Activated naive CD4-positive, alpha-beta T cell treated with anti-CD3 and anti-CD28 coated beads for 36 hours (primary cell): ENCODE measurements at regions of chr1 and their contacts with region 1.

Region 1: GRCh38 chr1:161399257-161399998 is 31.8 kb upstream of the CFAP126 start:
- DNase-seq: peak; percentile 94
- H3K4me3 Mint-ChIP-seq: peak overlapping the region; percentile 96
- H3K27ac Mint-ChIP-seq: peak overlapping the region; percentile 100
- H3K4me1 Mint-ChIP-seq: peaks cover 25% of the 10 kb centered on the region
- H3K27me3 Mint-ChIP-seq: peaks cover 6% of the 10 kb centered on the region

Region 2: DNA sequence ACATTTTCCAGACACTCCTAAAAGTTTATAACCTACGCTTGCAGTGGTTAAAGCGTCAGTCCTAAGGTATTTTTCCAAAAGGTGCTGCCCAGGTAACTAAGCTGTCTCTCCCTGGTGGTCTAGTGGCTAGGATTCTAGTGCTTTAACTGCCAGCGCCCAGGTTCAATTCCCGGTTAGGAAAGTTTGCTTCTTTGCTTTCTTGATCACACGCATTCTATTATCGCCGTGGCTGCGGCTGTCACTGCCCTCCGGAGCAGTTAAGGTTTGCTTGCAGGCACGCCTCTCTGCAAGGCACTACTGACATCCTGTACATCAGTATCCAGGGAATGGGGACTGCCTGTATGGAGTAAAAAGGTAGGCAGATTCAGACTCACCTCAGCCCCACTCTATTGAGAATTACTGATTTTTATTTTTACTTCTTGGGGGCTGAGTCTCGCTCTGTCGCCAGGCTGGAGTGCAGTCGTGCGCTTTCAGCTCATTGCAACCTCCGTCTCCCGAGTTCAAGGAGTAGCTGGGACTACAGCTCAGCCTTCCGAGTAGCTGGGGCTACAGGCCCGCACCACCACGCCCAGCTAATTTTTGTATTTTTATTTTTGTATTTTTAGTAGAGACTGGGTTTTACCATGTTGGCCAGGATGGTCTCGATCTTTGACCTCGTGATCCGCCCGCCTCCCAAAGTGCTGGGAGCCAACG is 21.5 kb after region 1 on chr1:
- CTCF ChIA-PET with region 1: interaction called, 3 read pairs
- intact Hi-C with region 1: loop called (anchors 1 kb)
- DNase-seq: no peak
- H3K4me3 Mint-ChIP-seq: peak overlapping the region; percentile 17
- H3K27ac Mint-ChIP-seq: no peak overlapping the region
- H3K4me1 Mint-ChIP-seq: peaks cover 4% of the 10 kb centered on the region
- H3K27me3 Mint-ChIP-seq: peaks cover 3% of the 10 kb centered on the region

Region 3: GRCh38 chr1:161440312-161440894 is 41.0 kb after region 1 on chr1:
- CTCF ChIA-PET with region 1: interaction called, 3 read pairs
- intact Hi-C with region 1: loop called (anchors 10 kb)
- DNase-seq: peak; percentile 73
- H3K4me3 Mint-ChIP-seq: peak overlapping the region; percentile 85
- H3K27ac Mint-ChIP-seq: peak overlapping the region; percentile 83
- H3K4me1 Mint-ChIP-seq: peaks cover 5% of the 10 kb centered on the region
- H3K27me3 Mint-ChIP-seq: peaks cover 27% of the 10 kb centered on the region

Region 4: GRCh38 chr1:161473363-161473762 is 73.9 kb after region 1 on chr1:
- CTCF ChIA-PET with region 1: no interaction called
- intact Hi-C with region 1: no loop called
- DNase-seq: peak; percentile 28
- H3K4me3 Mint-ChIP-seq: peak overlapping the region; percentile 29
- H3K27ac Mint-ChIP-seq: no peak overlapping the region
- H3K4me1 Mint-ChIP-seq: peaks cover 5% of the 10 kb centered on the region
- H3K27me3 Mint-ChIP-seq: peaks cover 28% of the 10 kb centered on the region

Region 5: GRCh38 chr1:161531986-161532643 is 132.7 kb after region 1 on chr1:
- CTCF ChIA-PET with region 1: no interaction called
- intact Hi-C with region 1: loop called (anchors 2 kb)
- DNase-seq: no peak
- H3K4me3 Mint-ChIP-seq: no peak overlapping the region
- H3K27ac Mint-ChIP-seq: no peak overlapping the region
- H3K4me1 Mint-ChIP-seq: peaks cover 14% of the 10 kb centered on the region
- H3K27me3 Mint-ChIP-seq: peaks cover 3% of the 10 kb centered on the region